SK-N-SH (cell line): ENCODE measurements at regions of chr1 and their contacts with region 1.

Region 1: GRCh38 chr1:84944767-84945486 is 51.9 kb upstream of the LPAR3 start:
- DNase-seq: peak; percentile 63
- H3K4me3 ChIP-seq: peak overlapping the region; percentile 41 to 48
- H3K27ac ChIP-seq: no peak overlapping the region; a peak in 1 of 4 replicates
- H3K4me1 ChIP-seq: no peaks in the 10 kb centered on the region; a peak in 2 of 4 replicates
- H3K27me3 ChIP-seq: peaks cover 7% of the 10 kb centered on the region
- CTCF ChIP-seq: peak; percentile 98
- EP300 ChIP-seq: no peak
- RAD21 ChIP-seq: peak; percentile 67

Region 2: DNA sequence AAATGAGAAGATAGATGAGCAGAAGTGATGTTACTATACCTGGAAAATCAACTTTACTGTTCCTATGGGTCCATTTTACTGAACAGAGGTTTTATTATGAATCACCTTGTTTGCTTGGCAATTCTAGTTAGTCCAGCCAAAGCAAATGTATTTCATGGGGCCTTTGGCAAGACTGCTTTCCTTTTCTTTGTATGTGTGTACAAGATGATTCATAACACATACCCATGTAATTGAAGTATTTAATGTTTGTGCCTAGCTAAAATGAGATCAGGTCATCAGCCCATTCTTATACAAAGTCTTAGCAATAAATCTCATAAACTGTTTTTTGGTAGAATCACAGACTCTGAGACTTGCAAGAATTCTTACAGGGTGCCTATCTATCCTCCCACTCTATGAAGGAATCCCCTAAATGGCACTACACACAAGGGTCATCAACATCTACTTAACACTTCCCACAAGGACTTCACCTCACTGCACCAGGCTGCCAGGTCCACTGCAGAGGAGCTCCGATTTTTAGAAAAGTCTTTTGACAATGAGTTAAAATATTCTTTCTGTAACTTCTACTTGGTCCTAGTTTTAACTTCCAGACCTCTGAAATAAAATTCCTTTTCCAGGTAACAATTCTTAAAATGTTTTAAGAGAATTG is 110.4 kb before region 1 on chr1:
- CTCF ChIA-PET with region 1: no interaction called
- POLR2A ChIA-PET with region 1: no interaction called
- DNase-seq: no peak
- H3K4me3 ChIP-seq: no peak overlapping the region
- H3K27ac ChIP-seq: no peak overlapping the region
- H3K4me1 ChIP-seq: no peaks in the 10 kb centered on the region
- H3K27me3 ChIP-seq: peaks cover 15% of the 10 kb centered on the region; the same call in 1 of the 2 replicates
- CTCF ChIP-seq: no peak
- EP300 ChIP-seq: no peak
- RAD21 ChIP-seq: no peak

Region 3: GRCh38 chr1:84862810-84863251 is 82.1 kb before region 1 on chr1:
- CTCF ChIA-PET with region 1: no interaction called
- POLR2A ChIA-PET with region 1: no interaction called
- DNase-seq: no peak
- H3K4me3 ChIP-seq: no peak overlapping the region
- H3K27ac ChIP-seq: no peak overlapping the region
- H3K4me1 ChIP-seq: no peaks in the 10 kb centered on the region
- H3K27me3 ChIP-seq: no peaks in the 10 kb centered on the region; the same call in 1 of the 2 replicates
- CTCF ChIP-seq: no peak
- EP300 ChIP-seq: no peak
- RAD21 ChIP-seq: no peak

Region 4: GRCh38 chr1:84919461-84919970 is 25.4 kb before region 1 on chr1:
- CTCF ChIA-PET with region 1: interaction called, 10 read pairs
- POLR2A ChIA-PET with region 1: no interaction called
- DNase-seq: no peak
- H3K4me3 ChIP-seq: no peak overlapping the region
- H3K27ac ChIP-seq: no peak overlapping the region
- H3K4me1 ChIP-seq: peaks cover 0 to 6% of the 10 kb centered on the region in 2 experiments; a peak in 1 of 4 replicates
- H3K27me3 ChIP-seq: no peaks in the 10 kb centered on the region; the same call in 1 of the 2 replicates
- CTCF ChIP-seq: no peak
- EP300 ChIP-seq: no peak
- RAD21 ChIP-seq: no peak

Region 5: GRCh38 chr1:85019994-85020393 is 75.1 kb after region 1 on chr1:
- CTCF ChIA-PET with region 1: interaction called, 11 read pairs
- POLR2A ChIA-PET with region 1: no interaction called
- DNase-seq: no peak
- H3K4me3 ChIP-seq: no peak overlapping the region
- H3K27ac ChIP-seq: no peak overlapping the region
- H3K4me1 ChIP-seq: no peaks in the 10 kb centered on the region
- H3K27me3 ChIP-seq: peaks cover 8% of the 10 kb centered on the region; the same call in 1 of the 2 replicates
- CTCF ChIP-seq: no peak
- EP300 ChIP-seq: no peak
- RAD21 ChIP-seq: no peak

Region 6: GRCh38 chr1:85033221-85033620 is 88.3 kb after region 1 on chr1:
- CTCF ChIA-PET with region 1: interaction called, 27 read pairs
- POLR2A ChIA-PET with region 1: no interaction called
- DNase-seq: no peak
- H3K4me3 ChIP-seq: no peak overlapping the region
- H3K27ac ChIP-seq: no peak overlapping the region
- H3K4me1 ChIP-seq: no peaks in the 10 kb centered on the region
- H3K27me3 ChIP-seq: peaks cover 19% of the 10 kb centered on the region; the same call in 1 of the 2 replicates
- CTCF ChIP-seq: no peak
- EP300 ChIP-seq: no peak
- RAD21 ChIP-seq: no peak

Region 7: DNA sequence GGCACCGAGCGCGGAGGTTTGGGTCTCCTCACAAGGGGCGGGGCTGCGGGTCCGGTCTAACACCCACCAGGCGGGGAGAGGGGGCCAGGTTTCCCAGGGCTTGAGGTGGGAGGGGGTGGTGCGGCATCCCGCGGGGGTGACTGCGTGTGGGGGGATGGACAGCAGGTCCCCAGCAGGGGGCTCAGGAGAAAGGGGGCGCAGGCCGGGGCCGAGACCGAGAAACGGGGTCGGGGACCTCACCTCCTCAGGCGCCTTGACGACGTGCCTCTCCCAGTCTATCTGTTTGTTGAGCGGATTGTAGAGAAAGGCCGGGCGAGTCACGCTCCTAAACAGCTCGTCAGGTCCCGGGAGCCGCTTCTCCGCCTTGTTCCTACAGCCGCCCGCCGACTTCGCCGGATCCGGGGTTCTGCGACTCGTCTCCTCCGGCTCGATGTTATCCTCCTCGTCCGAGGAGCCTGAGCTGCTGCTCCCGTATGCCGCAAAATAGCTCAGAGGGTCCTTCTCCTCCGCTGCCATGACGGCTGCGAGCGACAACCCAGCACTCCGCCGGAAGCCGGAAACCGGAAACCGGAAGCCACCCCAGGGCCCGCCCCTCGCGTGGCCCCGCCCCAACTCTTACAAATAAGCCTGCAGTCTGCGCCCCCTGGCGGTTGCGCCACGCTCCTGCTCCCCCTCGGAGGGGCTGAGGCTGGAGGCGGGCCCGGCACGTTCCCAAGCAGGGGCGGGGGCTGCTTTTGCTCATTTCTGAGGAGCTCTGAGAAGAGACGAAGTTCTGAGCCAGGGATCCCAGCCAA is 314.4 kb after region 1 on chr1 and contains the start of gene C1orf52:
- CTCF ChIA-PET with region 1: interaction called, 193 read pairs
- POLR2A ChIA-PET with region 1: interaction called, 10 read pairs
- DNase-seq: peak; percentile 95
- H3K4me3 ChIP-seq: peak within 1 kb of the TSS; percentile 75 to 99
- H3K27ac ChIP-seq: peak within 1 kb of the TSS; percentile 58 to 61; a peak in 2 of 4 replicates
- H3K4me1 ChIP-seq: peaks cover 4 to 12% of the 10 kb centered on the region in 2 experiments; a peak in 3 of 4 replicates
- H3K27me3 ChIP-seq: no peaks in the 10 kb centered on the region
- CTCF ChIP-seq: peak; percentile 95
- EP300 ChIP-seq: no peak
- RAD21 ChIP-seq: peak; percentile 58
- polyA plus RNA-seq, gene C1orf52: 23.4 and 24.3 TPM in 2 replicates